B cell (primary cell): ENCODE measurements at regions of chr19 and their contacts with region 1.

Region 1: DNA sequence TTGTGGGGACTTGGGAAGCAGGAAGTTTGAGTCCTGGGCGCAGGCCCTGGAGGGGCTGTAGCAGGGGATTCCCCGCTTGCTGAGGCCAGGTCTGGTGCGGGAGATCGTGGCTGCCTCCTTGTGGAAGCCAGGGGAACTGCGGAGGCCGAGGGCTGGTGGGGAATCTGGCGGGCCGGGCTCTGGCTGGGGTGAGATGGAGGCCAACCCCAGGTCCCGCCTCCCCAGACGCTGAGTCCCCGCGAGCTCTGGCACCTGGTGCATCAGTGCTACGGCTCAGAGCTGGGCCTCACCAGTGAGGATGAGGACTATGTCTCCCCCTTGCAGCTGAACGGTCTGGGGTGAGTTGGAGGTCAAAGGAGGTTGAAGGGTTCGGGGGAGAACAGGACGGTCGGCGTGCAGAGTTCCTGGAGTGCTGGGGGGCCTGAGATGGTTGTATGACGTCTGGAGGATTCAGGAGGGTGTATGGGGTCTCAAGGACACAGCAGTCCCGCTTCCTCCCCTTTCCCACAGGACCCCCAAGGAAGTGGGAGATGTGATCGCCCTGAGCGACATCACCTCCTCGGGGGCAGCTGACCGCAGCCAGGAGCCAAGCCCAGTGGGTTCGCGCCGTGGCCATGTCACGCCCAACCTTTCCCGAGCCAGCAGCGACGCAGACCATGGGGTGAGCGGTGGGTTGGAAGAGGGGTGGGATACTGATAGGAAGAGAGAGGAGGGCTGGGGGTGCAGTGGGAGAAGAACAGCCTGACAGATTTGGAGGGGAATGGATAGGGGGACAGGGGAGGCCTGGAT is 13.1 kb downstream of the GRAMD1A start:
- DNase-seq: peak; percentile 82
- ATAC-seq: peak; percentile 95
- H3K4me3 ChIP-seq: no peak overlapping the region
- H3K4me3 Mint-ChIP-seq: peak overlapping the region; percentile 43
- H3K27ac ChIP-seq: peak overlapping the region in 1 of 2 donors; percentile 42
- H3K27ac Mint-ChIP-seq: peak overlapping the region; percentile 76
- H3K4me1 ChIP-seq: peaks cover 17 to 31% of the 10 kb centered on the region in 2 donors
- H3K4me1 Mint-ChIP-seq: peaks cover 25% of the 10 kb centered on the region
- H3K27me3 ChIP-seq: no peaks in the 10 kb centered on the region
- H3K27me3 Mint-ChIP-seq: no peaks in the 10 kb centered on the region
- CTCF ChIP-seq: peak; percentile 97

Region 2: DNA sequence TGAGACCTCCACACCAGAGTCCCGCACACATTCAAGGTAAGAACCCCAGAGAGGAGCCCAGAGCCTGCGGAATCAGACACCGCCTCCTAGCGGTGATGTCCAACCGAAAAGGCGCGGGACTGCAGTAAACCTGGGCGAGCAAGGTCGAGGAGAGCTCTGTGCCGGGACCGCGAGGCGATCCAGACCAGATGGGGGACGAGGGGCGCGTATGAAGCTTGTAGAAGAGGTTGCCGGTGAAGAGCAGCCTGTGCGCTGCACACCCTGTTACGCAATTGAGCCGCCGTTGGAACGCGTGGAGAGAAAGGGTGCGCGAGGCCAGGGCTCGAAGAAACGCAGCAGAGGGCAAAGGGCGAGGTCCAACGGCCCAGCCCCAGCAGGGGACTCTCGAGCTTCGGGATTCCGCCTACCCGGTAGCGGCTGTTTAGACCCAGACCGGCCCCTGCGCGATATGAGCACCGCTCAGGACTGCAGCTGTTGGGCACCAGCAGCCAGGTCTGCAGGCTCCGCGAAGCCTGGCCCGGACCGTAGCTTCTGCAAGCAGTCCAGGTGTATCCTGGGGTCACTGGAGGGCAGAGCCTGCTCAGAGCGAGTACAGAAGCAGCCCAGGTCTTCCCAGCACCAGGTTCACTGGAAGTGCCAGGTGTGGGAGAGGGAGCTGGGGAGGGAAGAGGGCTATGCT is 174.3 kb before region 1 on chr19:
- CTCF ChIA-PET with region 1: interaction called, 7 read pairs
- POLR2A ChIA-PET with region 1: no interaction called
- intact Hi-C with region 1: loop called (anchors 2 kb)
- DNase-seq: peak; percentile 33
- ATAC-seq: peak; percentile 14
- H3K4me3 ChIP-seq: no peak overlapping the region
- H3K4me3 Mint-ChIP-seq: peak overlapping the region; percentile 49
- H3K27ac ChIP-seq: no peak overlapping the region
- H3K27ac Mint-ChIP-seq: no peak overlapping the region
- H3K4me1 ChIP-seq: peaks cover 0 to 9% of the 10 kb centered on the region in 2 donors
- H3K4me1 Mint-ChIP-seq: peaks cover 5% of the 10 kb centered on the region
- H3K27me3 ChIP-seq: peaks cover 0 to 18% (median 3%) of the 10 kb centered on the region in 4 experiments
- H3K27me3 Mint-ChIP-seq: peaks cover 20% of the 10 kb centered on the region
- CTCF ChIP-seq: peak; percentile 40

Region 3: DNA sequence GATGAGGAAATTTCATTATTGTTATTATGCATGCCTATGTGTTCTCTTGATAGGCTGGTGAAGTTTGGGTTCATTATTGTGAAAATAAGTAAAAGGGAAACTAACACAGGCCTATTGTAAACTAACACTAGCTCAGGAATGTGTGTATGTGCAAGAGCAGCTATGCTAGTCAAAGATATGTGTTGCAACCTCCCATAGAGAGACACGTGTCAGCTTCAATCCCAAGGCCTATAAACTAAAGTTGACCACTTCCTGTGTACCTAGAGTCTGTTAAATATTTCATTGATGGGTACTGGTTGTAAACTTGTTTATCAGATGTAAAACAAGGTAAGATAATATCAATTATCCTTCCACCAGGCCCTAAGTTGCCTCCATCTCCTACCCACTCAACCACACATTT is 131.2 kb before region 1 on chr19:
- CTCF ChIA-PET with region 1: no interaction called
- POLR2A ChIA-PET with region 1: no interaction called
- intact Hi-C with region 1: no loop called
- DNase-seq: no peak
- ATAC-seq: no peak
- H3K4me3 ChIP-seq: no peak overlapping the region
- H3K4me3 Mint-ChIP-seq: no peak overlapping the region
- H3K27ac ChIP-seq: no peak overlapping the region
- H3K27ac Mint-ChIP-seq: no peak overlapping the region
- H3K4me1 ChIP-seq: no peaks in the 10 kb centered on the region
- H3K4me1 Mint-ChIP-seq: no peaks in the 10 kb centered on the region
- H3K27me3 ChIP-seq: no peaks in the 10 kb centered on the region
- H3K27me3 Mint-ChIP-seq: peaks cover 28% of the 10 kb centered on the region
- CTCF ChIP-seq: no peak

Region 4: GRCh38 chr19:34918190-34918589 is 95.0 kb before region 1 on chr19:
- CTCF ChIA-PET with region 1: no interaction called
- POLR2A ChIA-PET with region 1: no interaction called
- intact Hi-C with region 1: no loop called
- DNase-seq: no peak
- ATAC-seq: no peak
- H3K4me3 ChIP-seq: no peak overlapping the region
- H3K4me3 Mint-ChIP-seq: no peak overlapping the region
- H3K27ac ChIP-seq: no peak overlapping the region
- H3K27ac Mint-ChIP-seq: no peak overlapping the region
- H3K4me1 ChIP-seq: no peaks in the 10 kb centered on the region
- H3K4me1 Mint-ChIP-seq: no peaks in the 10 kb centered on the region
- H3K27me3 ChIP-seq: peaks cover 0 to 6% (median 0%) of the 10 kb centered on the region in 4 experiments
- H3K27me3 Mint-ChIP-seq: peaks cover 2% of the 10 kb centered on the region
- CTCF ChIP-seq: no peak

Region 5: GRCh38 chr19:34999498-35000341 is 13.5 kb before region 1 on chr19 and contains the start of gene GRAMD1A:
- CTCF ChIA-PET with region 1: interaction called, 32 read pairs
- POLR2A ChIA-PET with region 1: no interaction called
- intact Hi-C with region 1: no loop called
- DNase-seq: peak; percentile 77
- ATAC-seq: peak; percentile 61
- H3K4me3 ChIP-seq: peak within 1 kb of the TSS; percentile 66 to 84 (median 74)
- H3K4me3 Mint-ChIP-seq: peak within 1 kb of the TSS; percentile 93
- H3K27ac ChIP-seq: peak within 1 kb of the TSS; percentile 79 to 84
- H3K27ac Mint-ChIP-seq: peak within 1 kb of the TSS; percentile 91
- H3K4me1 ChIP-seq: peaks cover 47 to 67% of the 10 kb centered on the region in 2 donors
- H3K4me1 Mint-ChIP-seq: peaks cover 59% of the 10 kb centered on the region
- H3K27me3 ChIP-seq: no peaks in the 10 kb centered on the region
- H3K27me3 Mint-ChIP-seq: no peaks in the 10 kb centered on the region
- CTCF ChIP-seq: no peak
- total RNA-seq, gene GRAMD1A: 102 TPM in 2 replicates